Activated CD8-positive, alpha-beta memory T cell treated with anti-CD3 and anti-CD28 coated beads, Interleukin-2, amount 10 ng/mL, durations not matched to agents 7 days and 5 days (primary cell): ENCODE measurements at regions of chr5 and their contacts with region 1.

Region 1: DNA sequence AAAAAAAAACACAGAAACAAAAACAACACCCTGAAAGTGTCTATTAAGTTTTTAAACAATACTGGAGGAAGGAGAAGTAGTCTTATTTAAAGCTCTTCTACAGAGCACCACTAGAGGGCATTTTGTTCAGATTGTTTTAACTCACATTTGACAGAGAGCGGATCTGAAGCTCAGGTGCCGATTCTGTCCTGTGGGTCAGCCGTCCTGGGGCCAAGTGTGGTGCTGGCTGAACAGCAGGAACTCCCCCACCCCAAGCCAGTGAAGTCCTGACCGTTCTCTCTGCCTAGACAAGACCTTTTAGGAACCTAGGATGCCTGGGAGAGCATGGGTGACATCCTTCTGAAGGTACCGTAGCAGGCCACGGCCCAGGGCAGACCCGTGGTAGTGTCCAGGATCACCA is 3.9 kb downstream of the EXOC3 start:
- DNase-seq: no peak
- ATAC-seq: no peak
- H3K4me3 Mint-ChIP-seq: no peak overlapping the region
- H3K27ac Mint-ChIP-seq: no peak overlapping the region
- H3K4me1 Mint-ChIP-seq: peaks cover 34% of the 10 kb centered on the region
- H3K27me3 Mint-ChIP-seq: no peaks in the 10 kb centered on the region

Region 2: GRCh38 chr5:458547-459353 is 11.9 kb after region 1 on chr5:
- CTCF ChIA-PET with region 1: interaction called, 12 read pairs
- DNase-seq: no peak
- ATAC-seq: peak; percentile 46
- H3K4me3 Mint-ChIP-seq: no peak overlapping the region
- H3K27ac Mint-ChIP-seq: peak overlapping the region; percentile 71
- H3K4me1 Mint-ChIP-seq: peaks cover 53% of the 10 kb centered on the region
- H3K27me3 Mint-ChIP-seq: no peaks in the 10 kb centered on the region

Region 3: DNA sequence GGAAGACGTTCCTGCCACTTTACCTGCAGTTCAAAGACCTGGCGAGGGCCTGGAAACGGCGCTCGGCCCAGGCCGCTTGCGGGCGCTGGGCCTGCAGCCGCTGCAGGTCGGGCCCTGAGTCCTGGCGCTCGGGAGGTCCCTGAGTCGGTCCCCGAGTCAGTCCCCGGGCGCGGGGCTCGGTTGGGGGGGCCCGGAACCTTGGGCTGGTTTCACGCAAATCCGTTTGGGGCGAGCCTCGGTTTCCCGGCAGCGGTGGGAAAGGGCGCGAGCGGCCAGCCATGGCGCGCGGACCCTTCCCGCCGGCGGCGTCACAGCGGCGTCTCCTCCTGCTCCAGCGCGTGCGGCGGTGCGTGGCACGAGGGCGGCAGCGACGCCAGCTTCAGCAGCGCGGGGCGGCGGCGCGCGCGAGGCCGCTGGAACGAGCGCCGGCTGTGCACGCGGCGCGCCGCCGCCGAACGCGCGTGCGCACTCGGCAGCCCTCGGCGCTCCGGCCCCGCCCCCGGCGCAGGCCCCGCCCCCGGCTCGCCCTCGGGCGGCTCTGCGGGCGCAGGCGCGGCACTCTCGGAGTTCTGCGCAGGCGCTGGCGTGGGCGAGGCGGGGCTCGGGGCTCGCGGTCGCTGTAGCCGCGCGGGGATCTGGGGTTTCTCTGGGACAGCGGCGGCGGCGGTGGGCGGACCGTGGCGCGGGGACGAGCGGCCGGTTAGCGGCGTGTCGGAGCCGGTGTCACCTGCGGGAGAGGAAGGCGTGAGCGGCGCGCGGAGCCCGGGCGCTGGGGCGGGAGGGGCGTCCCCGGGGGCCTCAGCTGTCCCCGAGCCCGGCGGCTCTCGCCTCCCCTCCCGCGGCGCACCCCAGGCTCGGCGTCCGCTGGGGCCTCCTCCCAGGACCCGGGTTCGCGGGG is 26.0 kb after region 1 on chr5:
- CTCF ChIA-PET with region 1: interaction called, 28 read pairs
- DNase-seq: peak; percentile 87
- ATAC-seq: peak; percentile 86
- H3K4me3 Mint-ChIP-seq: peak overlapping the region; percentile 75
- H3K27ac Mint-ChIP-seq: peak overlapping the region; percentile 79
- H3K4me1 Mint-ChIP-seq: peaks cover 25% of the 10 kb centered on the region
- H3K27me3 Mint-ChIP-seq: peaks cover 5% of the 10 kb centered on the region